ENCODE measurements at regions of chr6 and their contacts with region 1.

Region 1: GRCh38 chr6:137647762-137648447 is 153.7 kb upstream of the OLIG3 start:
- DNase-seq: no peak
- H3K4me3 ChIP-seq: no peak overlapping the region
- H3K27ac ChIP-seq: no peak overlapping the region
- H3K4me1 ChIP-seq: no peaks in the 10 kb centered on the region
- CTCF ChIP-seq: no peak

Region 2: DNA sequence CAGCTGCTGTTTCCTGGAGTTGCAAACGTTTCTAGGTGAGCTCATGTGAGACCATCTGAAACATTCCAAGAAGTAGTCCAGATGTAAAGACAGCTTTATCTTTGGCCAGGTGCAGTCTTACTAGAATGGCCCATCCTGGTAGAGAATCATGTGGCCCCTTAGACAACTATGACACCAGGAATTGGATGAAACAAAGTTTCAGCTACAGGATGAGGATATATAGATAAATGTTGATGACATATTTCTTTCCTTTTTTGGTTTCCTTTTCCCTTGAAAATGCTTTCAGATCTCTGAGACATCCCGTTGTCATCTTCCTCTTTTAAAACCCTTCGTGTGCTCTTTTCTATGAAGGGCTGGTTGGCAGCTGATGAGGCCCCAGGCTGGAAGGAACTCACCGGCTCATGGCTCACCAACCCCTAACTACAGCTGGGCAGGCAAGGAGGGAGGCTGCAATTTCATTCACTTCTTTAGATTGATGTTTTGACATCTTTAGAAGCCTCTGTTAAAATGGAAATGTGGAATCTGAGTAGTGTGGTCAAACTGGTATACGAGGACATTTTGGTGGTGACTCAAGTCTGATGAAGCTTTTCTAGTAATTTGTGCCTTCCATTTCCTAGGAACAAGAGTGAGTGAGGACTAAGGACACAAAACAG is 51.3 kb after region 1 on chr6:
- CTCF ChIA-PET with region 1: no interaction called
- POLR2A ChIA-PET with region 1: interaction called, 10 read pairs
- intact Hi-C with region 1: no loop called
- DNase-seq: no peak
- H3K4me3 ChIP-seq: no peak overlapping the region
- H3K27ac ChIP-seq: no peak overlapping the region
- H3K4me1 ChIP-seq: peaks cover 10% of the 10 kb centered on the region
- CTCF ChIP-seq: no peak

Region 3: GRCh38 chr6:137709424-137710236 is 61.7 kb after region 1 on chr6:
- CTCF ChIA-PET with region 1: no interaction called
- POLR2A ChIA-PET with region 1: no interaction called
- intact Hi-C with region 1: no loop called
- DNase-seq: no peak
- H3K4me3 ChIP-seq: no peak overlapping the region
- H3K27ac ChIP-seq: no peak overlapping the region
- H3K4me1 ChIP-seq: peaks cover 35% of the 10 kb centered on the region
- CTCF ChIP-seq: peak; percentile 2; the same call in 1 of the 2 replicates

Region 4: DNA sequence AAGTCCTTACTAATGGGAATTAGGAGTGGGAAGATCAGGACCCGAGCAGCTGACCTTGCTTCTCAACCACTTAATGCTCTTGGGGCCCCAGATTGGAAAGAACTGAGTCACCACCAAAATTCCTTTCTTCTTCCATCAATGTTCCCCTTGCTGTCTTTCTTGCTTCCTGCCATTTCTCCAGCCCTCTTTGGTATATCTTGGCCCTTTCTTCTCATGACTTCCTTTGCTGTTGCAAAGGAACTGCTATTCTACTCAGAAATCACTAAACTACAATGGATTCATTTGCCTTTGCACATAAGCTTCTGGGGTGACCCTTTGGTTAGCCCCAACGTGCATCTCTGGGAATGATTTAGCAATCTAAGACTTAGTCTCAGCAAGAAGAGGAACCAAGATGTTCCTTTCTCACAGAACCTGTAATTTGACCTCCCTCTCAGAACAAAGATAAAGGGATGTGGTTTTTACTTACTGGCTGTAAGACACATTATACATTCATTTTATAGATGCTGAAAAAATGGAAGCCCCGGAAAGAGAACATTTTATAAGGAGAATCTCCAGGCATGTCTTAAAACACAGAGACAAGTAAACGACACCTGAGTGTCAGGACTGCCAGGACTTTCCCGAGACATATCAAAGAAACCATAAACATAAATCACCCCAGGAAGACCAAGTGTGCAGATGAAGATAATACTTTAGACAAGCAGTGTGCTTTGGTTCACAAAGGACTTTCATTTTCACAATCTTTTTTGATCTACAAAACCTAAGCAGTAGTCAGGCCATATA is 120.2 kb after region 1 on chr6:
- CTCF ChIA-PET with region 1: no interaction called
- POLR2A ChIA-PET with region 1: no interaction called
- intact Hi-C with region 1: no loop called
- DNase-seq: peak; percentile 42
- H3K4me3 ChIP-seq: no peak overlapping the region
- H3K27ac ChIP-seq: no peak overlapping the region
- H3K4me1 ChIP-seq: peaks cover 12% of the 10 kb centered on the region
- CTCF ChIP-seq: no peak